ENCODE measurements at regions of chr4 and their contacts with region 1.

Region 1: DNA sequence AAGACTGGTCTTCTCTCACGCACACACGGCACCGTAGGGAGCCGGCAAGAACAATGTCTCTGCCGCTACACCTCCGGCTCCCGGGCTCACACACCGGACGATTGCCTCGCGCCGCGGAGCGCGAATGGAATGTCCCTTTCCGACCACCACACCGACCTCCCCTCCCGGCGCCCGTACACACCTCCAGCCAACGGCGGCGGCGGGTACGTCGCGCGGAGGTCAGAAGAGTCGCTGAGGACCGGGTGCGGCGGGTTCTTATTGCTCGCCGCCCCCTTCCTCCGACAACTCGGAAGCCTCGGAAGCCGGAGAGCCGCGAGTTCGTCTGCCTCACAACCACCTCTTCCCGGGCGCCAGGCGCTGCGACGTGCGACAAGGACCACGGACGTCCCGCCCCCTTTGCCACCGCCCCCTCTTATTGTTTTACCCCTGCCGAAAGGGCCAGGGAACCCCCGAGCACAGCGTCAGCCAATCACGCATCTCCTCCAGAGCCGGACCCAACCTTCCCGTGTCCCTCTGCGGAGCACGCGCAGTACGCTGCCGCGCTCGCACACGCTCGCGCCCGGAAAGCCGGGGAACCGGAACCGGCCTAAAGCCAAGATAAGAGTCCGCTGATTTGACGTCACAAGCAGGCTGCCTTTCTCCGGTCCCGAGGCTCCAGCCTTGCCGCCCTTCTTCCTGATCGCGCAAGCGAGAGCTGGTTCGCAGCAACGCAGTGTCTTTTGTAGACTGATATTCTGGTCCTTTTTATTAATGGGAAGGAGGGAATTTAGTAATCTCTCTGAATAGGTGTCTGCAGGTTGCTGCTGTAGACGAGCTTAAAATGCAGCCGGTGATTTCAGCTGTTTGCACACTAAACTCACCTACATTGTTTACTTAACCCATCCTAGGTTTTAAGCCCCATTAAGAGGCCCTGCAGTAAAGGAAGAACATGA is at the start of gene G3BP2:
- DNase-seq: peak; percentile 95 to 98 (median 97)
- H3K4me3 ChIP-seq: peak within 1 kb of the TSS; percentile 61 to 99 (median 92)
- H3K27ac ChIP-seq: peak within 1 kb of the TSS; percentile 82 to 99 (median 97)
- H3K27me3 ChIP-seq: no peaks in the 10 kb centered on the region
- CTCF ChIP-seq: peak in 16 of 56 donors; percentile 5 to 43 (median 22)
- total RNA-seq, gene G3BP2: 105 to 375 (median 251) TPM

Region 2: GRCh38 chr4:75514131-75514948 is 159.0 kb before region 1 on chr4 and contains the starts of genes RCHY1 and THAP6:
- intact Hi-C with region 1: loop called in 1 of 2 experiments (anchors 10 kb)
- DNase-seq: peak; percentile 92 to 98 (median 96)
- H3K4me3 ChIP-seq: peak within 1 kb of the TSS; percentile 65 to 98 (median 87)
- H3K27ac ChIP-seq: peak within 1 kb of the TSS; percentile 79 to 99 (median 95)
- H3K27me3 ChIP-seq: no peaks in the 10 kb centered on the region
- CTCF ChIP-seq: peak in 37 of 56 donors; percentile 5 to 64 (median 31)
- total RNA-seq, gene RCHY1: 20.6 to 68.6 (median 39.7) TPM
- total RNA-seq, gene THAP6: 12.4 to 45.4 (median 22.4) TPM

Region 3: DNA sequence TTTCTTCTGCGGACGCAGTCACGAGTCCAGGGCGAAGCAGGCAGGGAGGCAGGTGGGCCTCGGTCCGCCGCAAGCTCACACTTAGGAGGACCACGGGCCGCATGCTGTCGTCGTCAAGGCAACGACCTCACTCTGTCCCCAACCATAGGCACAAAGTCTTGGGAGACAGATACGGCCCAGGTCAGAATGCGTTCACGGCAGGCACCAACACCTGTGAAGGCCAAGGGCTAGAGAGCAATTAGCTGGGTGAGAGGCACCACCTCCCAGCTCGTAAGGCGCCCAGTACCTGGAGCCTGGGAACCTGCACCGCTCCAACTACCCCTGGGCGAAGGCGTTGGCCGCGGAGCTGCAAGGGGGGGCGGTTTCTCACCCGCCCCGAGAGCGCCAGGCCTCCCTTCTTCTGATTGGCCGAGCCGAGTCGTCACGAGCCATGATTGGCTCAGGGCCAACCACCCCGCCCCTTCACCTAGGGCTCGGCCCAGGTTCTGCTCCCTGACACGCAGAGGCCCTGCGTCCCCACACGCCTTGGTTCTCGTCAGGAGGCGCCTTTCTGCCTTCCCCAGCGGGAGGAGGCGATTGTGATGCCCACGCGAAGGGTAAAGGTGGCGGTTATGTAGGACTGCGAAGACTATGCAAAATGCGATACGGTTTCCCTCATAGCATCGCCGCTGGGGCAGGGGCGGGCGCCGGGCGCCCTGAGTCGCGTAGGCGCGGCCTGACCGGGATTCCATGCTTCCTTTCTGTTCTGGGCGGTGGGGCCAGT is 42.9 kb before region 1 on chr4 and contains the start of gene CDKL2:
- intact Hi-C with region 1: loop called (anchors 2 to 5 kb)
- DNase-seq: peak; percentile 72 to 96 (median 83)
- H3K4me3 ChIP-seq: peak within 1 kb of the TSS; percentile 57 to 96 (median 81)
- H3K27ac ChIP-seq: peak within 1 kb of the TSS in 54 of 59 donors; percentile 1 to 89 (median 72)
- H3K27me3 ChIP-seq: no peaks in the 10 kb centered on the region
- CTCF ChIP-seq: peak in 2 of 56 donors; percentile 4 to 11
- total RNA-seq, gene CDKL2: 11.4 to 42.6 (median 28.4) TPM

Region 4: GRCh38 chr4:75724066-75724866 is 51.0 kb after region 1 on chr4 and contains the start of gene USO1:
- intact Hi-C with region 1: loop called (anchors 1 to 2 kb)
- DNase-seq: peak; percentile 98 to 100 (median 99)
- H3K4me3 ChIP-seq: peak within 1 kb of the TSS; percentile 68 to 98 (median 94)
- H3K27ac ChIP-seq: peak within 1 kb of the TSS; percentile 68 to 97 (median 88)
- H3K27me3 ChIP-seq: no peaks in the 10 kb centered on the region
- CTCF ChIP-seq: peak; percentile 38 to 80 (median 66)
- total RNA-seq, gene USO1: 29.0 to 63.1 (median 46.5) TPM

Region 5: DNA sequence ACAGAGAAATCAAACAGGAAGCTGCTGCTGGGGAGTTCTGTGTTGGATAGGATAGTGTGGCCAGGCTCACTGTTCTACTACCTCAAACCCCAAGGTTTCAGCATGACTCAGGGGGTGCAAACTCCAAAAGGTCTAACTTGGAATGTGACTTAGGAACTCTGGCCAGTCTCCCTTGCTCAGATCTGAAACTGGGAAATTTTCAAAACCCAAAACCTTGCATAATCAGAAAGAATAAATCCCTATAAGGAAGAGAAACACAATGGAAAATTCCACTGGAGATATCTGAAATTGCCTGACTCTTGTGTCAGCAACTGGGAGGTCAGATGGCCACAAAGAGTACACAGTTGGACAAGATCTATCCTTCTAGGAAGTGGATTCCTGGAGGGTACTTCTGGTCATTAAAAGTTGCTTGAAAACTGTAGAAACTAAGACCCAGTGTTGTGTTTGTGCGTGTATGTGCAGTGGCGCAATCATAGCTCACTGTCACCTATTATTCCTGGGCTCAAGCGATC is 170.9 kb after region 1 on chr4:
- intact Hi-C with region 1: loop called in 1 of 2 experiments (anchors 10 kb)
- DNase-seq: no peak
- H3K4me3 ChIP-seq: no peak overlapping the region
- H3K27ac ChIP-seq: peak overlapping the region in 12 of 59 donors; percentile 6 to 49 (median 34)
- H3K27me3 ChIP-seq: no peaks in the 10 kb centered on the region
- CTCF ChIP-seq: no peak